OCI-LY7 (cell line): ENCODE measurements at regions of chr12 and their contacts with region 1.

Region 1: GRCh38 chr12:68904351-68904962 is 28.5 kb downstream of the CPM start:
- DNase-seq: peak; percentile 46
- H3K4me3 ChIP-seq: no peak overlapping the region
- H3K27ac ChIP-seq: no peak overlapping the region
- H3K4me1 ChIP-seq: peaks cover 28% of the 10 kb centered on the region
- CTCF ChIP-seq: no peak

Region 2: GRCh38 chr12:68772714-68773113 is 131.7 kb before region 1 on chr12:
- CTCF ChIA-PET with region 1: no interaction called
- POLR2A ChIA-PET with region 1: no interaction called
- intact Hi-C with region 1: no loop called
- DNase-seq: peak; percentile 96
- H3K4me3 ChIP-seq: peak overlapping the region; percentile 45
- H3K27ac ChIP-seq: peak overlapping the region; percentile 100
- H3K4me1 ChIP-seq: peaks cover 81% of the 10 kb centered on the region
- CTCF ChIP-seq: no peak

Region 3: GRCh38 chr12:68919581-68920239 is 15.3 kb after region 1 on chr12:
- CTCF ChIA-PET with region 1: interaction called, 8 read pairs
- POLR2A ChIA-PET with region 1: interaction called, 15 read pairs
- intact Hi-C with region 1: no loop called
- DNase-seq: no peak
- H3K4me3 ChIP-seq: no peak overlapping the region
- H3K27ac ChIP-seq: no peak overlapping the region
- H3K4me1 ChIP-seq: no peaks in the 10 kb centered on the region
- CTCF ChIP-seq: no peak